OCI-LY7 (cell line): ENCODE measurements at regions of chr3 and their contacts with region 1.

Region 1: DNA sequence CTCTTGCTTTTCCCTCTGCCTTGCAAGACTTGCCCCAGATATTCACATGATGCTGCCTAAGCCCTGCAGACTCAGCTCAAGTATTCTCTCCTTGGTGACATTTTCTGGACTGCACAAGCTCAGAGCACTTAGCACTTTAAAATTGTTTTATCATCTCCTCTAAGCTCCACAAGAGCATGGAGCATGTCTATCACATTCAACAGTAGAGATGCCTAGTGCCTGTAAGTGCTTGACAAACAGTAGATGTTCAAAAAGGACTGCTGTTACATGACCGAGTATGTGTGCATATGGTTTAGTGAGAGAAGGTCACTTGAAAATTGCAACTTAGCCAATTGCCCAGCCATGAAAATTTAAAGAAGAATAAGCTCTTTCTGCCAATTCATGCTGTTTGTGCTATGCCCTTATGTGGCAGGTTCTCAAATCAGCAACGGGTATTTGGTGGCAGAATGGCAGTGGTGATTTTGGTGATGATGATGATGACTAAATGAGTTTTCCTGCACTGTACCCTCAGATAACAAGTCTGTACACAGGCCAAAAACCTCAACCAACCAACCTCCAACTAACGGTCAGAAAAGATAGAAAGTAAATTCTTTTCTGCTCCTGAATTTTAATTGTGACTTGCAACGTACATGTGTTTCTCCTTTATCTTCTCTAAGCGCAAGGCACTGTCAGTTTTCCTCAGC is 647.2 kb upstream of the UBE2E2 start:
- DNase-seq: no peak
- H3K4me3 ChIP-seq: no peak overlapping the region
- H3K27ac ChIP-seq: no peak overlapping the region
- H3K4me1 ChIP-seq: no peaks in the 10 kb centered on the region
- CTCF ChIP-seq: no peak

Region 2: GRCh38 chr3:22485954-22486353 is 69.9 kb before region 1 on chr3:
- CTCF ChIA-PET with region 1: no interaction called
- POLR2A ChIA-PET with region 1: no interaction called
- intact Hi-C with region 1: no loop called
- DNase-seq: no peak
- H3K4me3 ChIP-seq: no peak overlapping the region
- H3K27ac ChIP-seq: no peak overlapping the region
- H3K4me1 ChIP-seq: no peaks in the 10 kb centered on the region
- CTCF ChIP-seq: no peak

Region 3: GRCh38 chr3:22526266-22526837 is 29.5 kb before region 1 on chr3:
- CTCF ChIA-PET with region 1: no interaction called
- POLR2A ChIA-PET with region 1: no interaction called
- intact Hi-C with region 1: no loop called
- DNase-seq: no peak
- H3K4me3 ChIP-seq: no peak overlapping the region
- H3K27ac ChIP-seq: no peak overlapping the region
- H3K4me1 ChIP-seq: no peaks in the 10 kb centered on the region
- CTCF ChIP-seq: no peak

Region 4: GRCh38 chr3:22960105-22960984 is 404.5 kb after region 1 on chr3:
- CTCF ChIA-PET with region 1: no interaction called
- POLR2A ChIA-PET with region 1: no interaction called
- intact Hi-C with region 1: loop called (anchors 5 kb)
- DNase-seq: peak; percentile 46
- H3K4me3 ChIP-seq: no peak overlapping the region
- H3K27ac ChIP-seq: no peak overlapping the region
- H3K4me1 ChIP-seq: no peaks in the 10 kb centered on the region
- CTCF ChIP-seq: peak; percentile 89